Caco-2 (cell line): ENCODE measurements at regions of chrX and their contacts with region 1.

Region 1: GRCh38 chrX:50343917-50344316 is 126.7 kb downstream of the DGKK start:
- DNase-seq: no peak
- H3K4me3 ChIP-seq: no peak overlapping the region
- H3K4me3 Mint-ChIP-seq: no peak overlapping the region
- H3K27ac Mint-ChIP-seq: no peak overlapping the region
- H3K4me1 ChIP-seq: peaks cover 4% of the 10 kb centered on the region; the same call in 1 of the 2 replicates
- H3K4me1 Mint-ChIP-seq: peaks cover 6% of the 10 kb centered on the region
- H3K27me3 ChIP-seq: no peaks in the 10 kb centered on the region
- H3K27me3 Mint-ChIP-seq: no peaks in the 10 kb centered on the region
- CTCF ChIP-seq: no peak

Region 2: DNA sequence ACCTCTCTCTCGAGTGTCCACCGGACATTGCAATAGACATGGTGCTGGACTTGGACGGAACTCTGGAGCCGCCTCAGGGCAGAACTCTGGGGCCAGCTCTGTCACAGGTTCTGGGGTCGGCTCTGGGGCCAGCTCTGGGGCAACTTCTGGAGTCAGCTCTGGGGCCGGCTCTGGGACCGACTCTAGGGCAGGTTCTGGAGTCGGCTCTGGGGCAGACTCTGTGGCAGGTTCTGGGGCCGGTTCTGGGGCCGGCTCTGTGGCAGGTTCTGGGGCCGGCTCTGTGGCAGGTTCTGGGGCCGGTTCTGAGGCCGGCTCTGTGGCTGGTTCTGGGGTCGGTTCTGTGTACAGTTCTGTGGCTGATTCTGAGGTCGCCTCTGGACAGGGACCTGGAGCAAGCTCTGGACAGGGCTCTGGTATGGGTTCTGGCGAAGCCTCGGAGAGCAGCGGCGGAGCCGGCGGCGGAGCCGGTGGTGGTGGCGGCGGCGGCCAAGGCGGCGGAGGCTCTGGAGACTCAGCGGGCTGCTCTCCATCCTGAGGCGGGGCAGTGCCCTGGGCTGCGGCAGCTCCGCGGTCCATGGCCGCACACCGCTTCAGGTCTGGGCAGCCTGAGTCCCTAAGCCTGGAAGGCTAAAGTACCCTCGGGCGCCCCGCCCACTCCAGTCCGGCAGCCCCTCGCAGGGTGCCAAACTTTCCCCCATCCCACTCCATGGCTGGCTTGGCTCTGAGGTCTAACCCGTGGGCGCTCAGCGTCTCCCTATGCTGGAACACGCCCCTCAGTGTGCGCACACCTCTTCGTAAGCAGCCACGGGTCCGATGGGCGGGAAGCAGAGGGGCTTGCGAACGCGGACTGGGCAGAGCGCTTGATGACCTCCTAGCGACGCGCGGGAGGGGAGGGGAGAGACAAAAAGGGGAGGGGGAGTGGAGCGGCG is 126.5 kb after region 1 on chrX and contains the start of gene DGKK:
- CTCF ChIA-PET with region 1: no interaction called
- POLR2A ChIA-PET with region 1: no interaction called
- intact Hi-C with region 1: loop called (anchors 10 kb)
- DNase-seq: peak; percentile 68 to 69
- H3K4me3 ChIP-seq: peak within 1 kb of the TSS; percentile 43
- H3K4me3 Mint-ChIP-seq: peak within 1 kb of the TSS; percentile 69
- H3K27ac Mint-ChIP-seq: no peak within 1 kb of the TSS
- H3K4me1 ChIP-seq: no peaks in the 10 kb centered on the region
- H3K4me1 Mint-ChIP-seq: peaks cover 9% of the 10 kb centered on the region
- H3K27me3 ChIP-seq: no peaks in the 10 kb centered on the region
- H3K27me3 Mint-ChIP-seq: peaks cover 16% of the 10 kb centered on the region
- CTCF ChIP-seq: no peak
- total RNA-seq, gene DGKK: 2.5 and 3.7 TPM in 2 replicates